Gastrocnemius medialis (tissue), 4 donors: ENCODE measurements at regions of chr2 and their contacts with region 1.

Region 1: GRCh38 chr2:98157557-98157956 is 70.6 kb downstream of the VWA3B start:
- DNase-seq: no peak
- ATAC-seq: no peak
- H3K4me3 ChIP-seq: no peak overlapping the region
- H3K27ac ChIP-seq: peak overlapping the region; percentile 93 to 99 (median 97)
- H3K4me1 ChIP-seq: peaks cover 54% of the 10 kb centered on the region in 2 donors
- H3K27me3 ChIP-seq: no peaks in the 10 kb centered on the region
- CTCF ChIP-seq: no peak
- POLR2A ChIP-seq: no peak

Region 2: GRCh38 chr2:96842600-96842999 is 1315.0 kb before region 1 on chr2:
- in situ Hi-C with region 1: no loop called
- intact Hi-C with region 1: loop called (anchors 5 kb)
- DNase-seq: peak; percentile 96 to 99
- ATAC-seq: peak; percentile 71 to 82
- H3K4me3 ChIP-seq: peak overlapping the region; percentile 52 to 65 (median 64)
- H3K27ac ChIP-seq: peak overlapping the region; percentile 94 to 99 (median 96)
- H3K4me1 ChIP-seq: peaks cover 21 to 44% of the 10 kb centered on the region in 2 donors
- H3K27me3 ChIP-seq: no peaks in the 10 kb centered on the region
- CTCF ChIP-seq: no peak
- POLR2A ChIP-seq: peak; percentile 83 to 94

Region 3: DNA sequence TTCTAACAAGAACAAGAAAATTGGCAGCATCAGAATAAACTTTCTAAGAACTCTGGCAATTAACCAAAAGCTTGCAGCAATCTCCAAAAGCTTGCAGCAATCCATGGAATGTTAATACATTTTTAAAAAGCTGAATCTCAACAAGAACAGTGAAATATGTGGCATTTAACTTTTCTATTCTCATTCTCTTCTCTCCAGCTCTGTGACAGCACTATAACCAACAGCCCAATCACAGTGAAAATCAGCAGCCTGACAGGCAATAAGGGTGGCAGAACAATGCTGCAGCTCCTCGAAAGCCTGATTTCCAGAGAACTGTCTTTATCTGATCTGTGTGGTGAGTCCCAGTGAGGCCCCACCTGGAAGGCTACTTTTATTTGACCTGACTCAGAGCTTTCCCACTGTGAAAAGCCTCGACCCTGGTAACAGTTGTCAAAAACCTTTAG is 221.8 kb before region 1 on chr2:
- in situ Hi-C with region 1: no loop called
- intact Hi-C with region 1: loop called (anchors 5 kb)
- DNase-seq: no peak
- ATAC-seq: peak; percentile 51 to 54
- H3K4me3 ChIP-seq: peak overlapping the region in 1 of 4 donors; percentile 25
- H3K27ac ChIP-seq: peak overlapping the region; percentile 80 to 92 (median 84)
- H3K4me1 ChIP-seq: peaks cover 62 to 71% of the 10 kb centered on the region in 2 donors
- H3K27me3 ChIP-seq: no peaks in the 10 kb centered on the region
- CTCF ChIP-seq: no peak
- POLR2A ChIP-seq: no peak

Region 4: DNA sequence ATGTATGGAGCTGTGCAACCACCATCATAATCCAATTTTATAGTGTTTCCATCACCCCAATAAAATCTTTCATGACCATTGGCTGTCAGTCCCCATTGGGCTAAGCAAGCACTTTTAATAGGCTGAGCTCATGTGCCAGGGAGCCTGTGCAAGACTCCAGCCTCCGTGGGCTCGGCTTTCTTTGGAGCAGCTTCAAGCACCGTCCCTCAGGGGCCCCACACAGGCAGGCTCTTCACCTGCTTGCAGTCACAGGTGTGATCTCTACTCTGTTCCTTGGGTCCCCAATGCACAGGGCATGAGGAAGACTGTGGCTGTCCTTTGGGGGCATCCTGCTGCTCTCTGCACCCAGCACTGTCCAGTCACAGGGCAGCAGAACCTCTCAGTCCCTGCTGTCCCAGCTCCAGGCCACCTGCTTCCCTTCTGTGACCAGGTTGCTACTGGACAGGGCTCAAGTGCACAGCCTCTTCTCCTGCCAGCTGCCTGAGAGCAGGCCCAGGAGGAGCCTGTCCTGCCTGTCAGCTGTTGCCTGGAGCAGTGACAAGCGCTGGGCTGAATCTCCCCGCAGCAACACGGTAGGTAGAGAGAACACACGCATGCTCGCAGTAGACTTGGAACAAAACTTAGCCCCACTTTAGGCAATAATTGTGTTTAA is 121.1 kb before region 1 on chr2:
- in situ Hi-C with region 1: no loop called
- intact Hi-C with region 1: loop called (anchors 5 kb)
- DNase-seq: peak; percentile 86 to 90
- ATAC-seq: peak; percentile 94
- H3K4me3 ChIP-seq: peak overlapping the region in 1 of 4 donors; percentile 27
- H3K27ac ChIP-seq: peak overlapping the region; percentile 67 to 77 (median 72)
- H3K4me1 ChIP-seq: peaks cover 39 to 40% of the 10 kb centered on the region in 2 donors
- H3K27me3 ChIP-seq: no peaks in the 10 kb centered on the region
- CTCF ChIP-seq: no peak
- POLR2A ChIP-seq: no peak

Region 5: GRCh38 chr2:98608116-98608999 is 450.8 kb after region 1 on chr2 and contains the starts of genes COA5 and UNC50:
- in situ Hi-C with region 1: no loop called
- intact Hi-C with region 1: loop called (anchors 1 kb)
- DNase-seq: peak; percentile 79 to 85
- ATAC-seq: peak; percentile 90
- H3K4me3 ChIP-seq: peak within 1 kb of the TSS; percentile 70 to 90 (median 86)
- H3K27ac ChIP-seq: peak within 1 kb of the TSS; percentile 91 to 97 (median 94)
- H3K4me1 ChIP-seq: peaks cover 53 to 59% of the 10 kb centered on the region in 2 donors
- H3K27me3 ChIP-seq: no peaks in the 10 kb centered on the region
- CTCF ChIP-seq: no peak
- POLR2A ChIP-seq: peak; percentile 79 to 89
- total RNA-seq, gene COA5: 26.1 to 45.1 (median 31.0) TPM
- total RNA-seq, gene UNC50: 30.3 to 43.1 (median 30.5) TPM